CD4-positive, alpha-beta T cell (primary cell): ENCODE measurements at regions of chr13 and their contacts with region 1.

Region 1: DNA sequence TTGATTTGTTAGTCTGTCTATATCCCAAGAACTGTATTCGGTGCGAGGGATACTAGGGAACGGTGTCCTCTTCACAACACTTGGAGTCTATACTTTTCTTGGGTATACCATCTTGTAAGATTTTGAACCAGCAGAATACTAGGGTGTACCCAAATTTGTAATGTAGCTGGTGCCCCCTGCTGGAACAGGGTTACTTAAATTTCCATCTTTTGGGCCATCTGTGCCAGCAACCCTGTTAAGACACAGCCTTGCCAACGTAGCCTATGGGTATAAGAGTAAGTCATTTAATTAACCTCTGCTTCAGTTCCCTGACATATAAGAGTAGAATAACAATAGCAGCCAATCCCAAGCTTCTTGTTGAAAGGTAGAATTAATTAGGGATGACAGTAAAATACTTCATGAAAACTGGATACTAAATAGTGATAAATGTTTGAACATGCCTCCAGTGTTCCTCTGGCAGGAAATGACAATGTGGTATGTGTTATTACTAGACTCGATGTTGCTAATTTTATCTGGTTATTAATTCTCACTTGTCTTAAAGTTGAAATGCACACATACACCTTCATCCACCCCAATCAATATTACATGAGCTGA is 607.6 kb downstream of the FGF9 start:
- DNase-seq: peak; percentile 51 to 77 (median 63)
- ATAC-seq: peak; percentile 59
- H3K4me3 ChIP-seq: no peak overlapping the region
- H3K4me3 Mint-ChIP-seq: no peak overlapping the region
- H3K27ac ChIP-seq: no peak overlapping the region
- H3K27ac Mint-ChIP-seq: no peak overlapping the region
- H3K4me1 ChIP-seq: no peaks in the 10 kb centered on the region
- H3K4me1 Mint-ChIP-seq: peaks cover 16% of the 10 kb centered on the region
- H3K27me3 ChIP-seq: no peaks in the 10 kb centered on the region
- H3K27me3 Mint-ChIP-seq: no peaks in the 10 kb centered on the region
- CTCF ChIP-seq: peak; percentile 71

Region 2: GRCh38 chr13:21849323-21849722 is 429.1 kb before region 1 on chr13:
- CTCF ChIA-PET with region 1: no interaction called
- POLR2A ChIA-PET with region 1: no interaction called
- intact Hi-C with region 1: loop called (anchors 1 to 2 kb)
- DNase-seq: peak in 5 of 14 experiments; percentile 6 to 61 (median 43)
- ATAC-seq: peak; percentile 74
- H3K4me3 ChIP-seq: no peak overlapping the region
- H3K4me3 Mint-ChIP-seq: no peak overlapping the region
- H3K27ac ChIP-seq: no peak overlapping the region
- H3K27ac Mint-ChIP-seq: no peak overlapping the region
- H3K4me1 ChIP-seq: no peaks in the 10 kb centered on the region
- H3K4me1 Mint-ChIP-seq: no peaks in the 10 kb centered on the region
- H3K27me3 ChIP-seq: peaks cover 0 to 2% of the 10 kb centered on the region in 2 experiments
- H3K27me3 Mint-ChIP-seq: no peaks in the 10 kb centered on the region
- CTCF ChIP-seq: peak; percentile 74

Region 3: GRCh38 chr13:21929400-21929799 is 349.0 kb before region 1 on chr13:
- CTCF ChIA-PET with region 1: no interaction called
- POLR2A ChIA-PET with region 1: no interaction called
- intact Hi-C with region 1: loop called in 1 of 2 experiments (anchors 10 kb)
- DNase-seq: no peak
- ATAC-seq: no peak
- H3K4me3 ChIP-seq: no peak overlapping the region
- H3K4me3 Mint-ChIP-seq: no peak overlapping the region
- H3K27ac ChIP-seq: no peak overlapping the region
- H3K27ac Mint-ChIP-seq: no peak overlapping the region
- H3K4me1 ChIP-seq: no peaks in the 10 kb centered on the region
- H3K4me1 Mint-ChIP-seq: no peaks in the 10 kb centered on the region
- H3K27me3 ChIP-seq: no peaks in the 10 kb centered on the region
- H3K27me3 Mint-ChIP-seq: no peaks in the 10 kb centered on the region
- CTCF ChIP-seq: no peak

Region 4: DNA sequence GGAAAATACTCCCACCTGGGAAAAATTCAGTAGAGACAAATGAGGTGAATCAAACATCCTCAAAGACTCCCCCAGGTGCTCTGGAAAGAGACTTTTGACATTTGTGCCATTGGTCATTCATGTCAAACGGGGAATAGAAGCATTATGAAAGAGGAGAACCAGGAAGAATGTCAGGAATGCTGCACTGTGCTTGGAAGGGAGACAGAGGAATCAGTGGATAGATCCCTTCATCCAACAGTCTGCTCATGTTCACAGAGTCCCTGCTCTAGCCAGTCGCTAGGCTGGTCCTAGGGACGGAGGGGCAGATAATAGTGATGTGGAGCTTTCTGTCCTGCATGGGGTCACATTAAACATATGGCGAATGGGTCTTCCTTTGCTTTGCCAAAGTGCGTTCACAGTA is 223.2 kb before region 1 on chr13:
- CTCF ChIA-PET with region 1: no interaction called
- POLR2A ChIA-PET with region 1: interaction called, 3 read pairs
- intact Hi-C with region 1: loop called (anchors 2 to 5 kb)
- DNase-seq: no peak
- ATAC-seq: no peak
- H3K4me3 ChIP-seq: no peak overlapping the region
- H3K4me3 Mint-ChIP-seq: no peak overlapping the region
- H3K27ac ChIP-seq: no peak overlapping the region
- H3K27ac Mint-ChIP-seq: no peak overlapping the region
- H3K4me1 ChIP-seq: peaks cover 53% of the 10 kb centered on the region
- H3K4me1 Mint-ChIP-seq: peaks cover 58% of the 10 kb centered on the region
- H3K27me3 ChIP-seq: no peaks in the 10 kb centered on the region
- H3K27me3 Mint-ChIP-seq: no peaks in the 10 kb centered on the region
- CTCF ChIP-seq: no peak